ENCODE measurements at regions of chr3 and their contacts with region 1.

Region 1: DNA sequence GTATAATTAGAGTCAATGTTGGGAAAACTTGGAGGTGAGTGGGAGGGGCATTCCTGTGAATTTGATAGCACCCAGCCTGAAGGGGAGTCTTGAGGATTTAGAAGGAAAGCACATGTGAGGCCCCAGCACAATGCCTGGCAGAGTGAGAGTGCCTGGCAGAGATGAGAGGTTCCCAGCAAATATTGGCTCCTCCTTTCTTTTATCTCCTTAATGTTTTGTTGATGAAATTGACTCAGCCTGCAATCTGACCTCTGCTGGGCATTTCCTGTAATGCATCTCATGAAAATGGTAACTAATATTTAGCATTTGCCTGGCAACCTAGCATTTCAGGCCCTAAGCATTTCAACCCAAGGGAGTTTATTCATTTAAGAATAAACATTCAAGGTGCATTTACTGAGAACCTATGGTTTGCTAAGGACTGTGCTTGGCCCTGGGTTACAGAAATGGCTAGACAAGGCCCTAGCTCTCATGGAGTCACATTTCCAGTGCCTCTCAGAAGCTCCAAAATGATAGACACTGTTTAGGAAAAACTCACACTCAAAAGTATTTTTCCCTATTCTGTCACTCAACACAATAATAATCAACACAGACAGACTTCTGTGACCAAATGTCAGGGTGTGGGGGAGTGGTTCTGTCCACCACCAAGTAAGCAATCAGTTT is 19.0 kb downstream of the PDHB start:
- DNase-seq: peak; percentile 46 to 65 (median 53)
- H3K4me3 ChIP-seq: no peak overlapping the region
- H3K4me3 Mint-ChIP-seq: no peak overlapping the region
- H3K27ac ChIP-seq: no peak overlapping the region
- H3K27ac Mint-ChIP-seq: peak overlapping the region in 1 of 7 donors; percentile 47
- H3K4me1 ChIP-seq: no peaks in the 10 kb centered on the region
- H3K4me1 Mint-ChIP-seq: peaks cover 0 to 6% (median 4%) of the 10 kb centered on the region in 4 donors
- H3K27me3 ChIP-seq: no peaks in the 10 kb centered on the region
- H3K27me3 Mint-ChIP-seq: no peaks in the 10 kb centered on the region

Region 2: GRCh38 chr3:58188173-58188564 is 226.5 kb before region 1 on chr3:
- CTCF ChIA-PET with region 1: interaction called, 5 read pairs
- POLR2A ChIA-PET with region 1: no interaction called
- intact Hi-C with region 1: loop called (anchors 1 kb)
- DNase-seq: no peak
- H3K4me3 ChIP-seq: no peak overlapping the region
- H3K4me3 Mint-ChIP-seq: no peak overlapping the region
- H3K27ac ChIP-seq: no peak overlapping the region
- H3K27ac Mint-ChIP-seq: no peak overlapping the region
- H3K4me1 ChIP-seq: no peaks in the 10 kb centered on the region
- H3K4me1 Mint-ChIP-seq: peaks cover 0 to 4% (median 3%) of the 10 kb centered on the region in 4 donors
- H3K27me3 ChIP-seq: no peaks in the 10 kb centered on the region
- H3K27me3 Mint-ChIP-seq: no peaks in the 10 kb centered on the region

Region 3: GRCh38 chr3:58237238-58237940 is 177.3 kb before region 1 on chr3 and contains the start of gene ABHD6:
- CTCF ChIA-PET with region 1: interaction called, 3 read pairs
- POLR2A ChIA-PET with region 1: interaction called, 3 read pairs
- intact Hi-C with region 1: loop called (anchors 1 kb)
- DNase-seq: peak; percentile 72 to 93 (median 88)
- H3K4me3 ChIP-seq: peak within 1 kb of the TSS; percentile 58
- H3K4me3 Mint-ChIP-seq: peak within 1 kb of the TSS; percentile 88 to 96 (median 92)
- H3K27ac ChIP-seq: peak within 1 kb of the TSS; percentile 62
- H3K27ac Mint-ChIP-seq: peak within 1 kb of the TSS; percentile 85 to 92 (median 91)
- H3K4me1 ChIP-seq: peaks cover 12% of the 10 kb centered on the region
- H3K4me1 Mint-ChIP-seq: peaks cover 7 to 21% (median 12%) of the 10 kb centered on the region in 4 donors
- H3K27me3 ChIP-seq: no peaks in the 10 kb centered on the region
- H3K27me3 Mint-ChIP-seq: peaks cover 3 to 4% of the 10 kb centered on the region in 2 donors
- total RNA-seq, gene ABHD6: 5.1 to 7.2 TPM

Region 4: DNA sequence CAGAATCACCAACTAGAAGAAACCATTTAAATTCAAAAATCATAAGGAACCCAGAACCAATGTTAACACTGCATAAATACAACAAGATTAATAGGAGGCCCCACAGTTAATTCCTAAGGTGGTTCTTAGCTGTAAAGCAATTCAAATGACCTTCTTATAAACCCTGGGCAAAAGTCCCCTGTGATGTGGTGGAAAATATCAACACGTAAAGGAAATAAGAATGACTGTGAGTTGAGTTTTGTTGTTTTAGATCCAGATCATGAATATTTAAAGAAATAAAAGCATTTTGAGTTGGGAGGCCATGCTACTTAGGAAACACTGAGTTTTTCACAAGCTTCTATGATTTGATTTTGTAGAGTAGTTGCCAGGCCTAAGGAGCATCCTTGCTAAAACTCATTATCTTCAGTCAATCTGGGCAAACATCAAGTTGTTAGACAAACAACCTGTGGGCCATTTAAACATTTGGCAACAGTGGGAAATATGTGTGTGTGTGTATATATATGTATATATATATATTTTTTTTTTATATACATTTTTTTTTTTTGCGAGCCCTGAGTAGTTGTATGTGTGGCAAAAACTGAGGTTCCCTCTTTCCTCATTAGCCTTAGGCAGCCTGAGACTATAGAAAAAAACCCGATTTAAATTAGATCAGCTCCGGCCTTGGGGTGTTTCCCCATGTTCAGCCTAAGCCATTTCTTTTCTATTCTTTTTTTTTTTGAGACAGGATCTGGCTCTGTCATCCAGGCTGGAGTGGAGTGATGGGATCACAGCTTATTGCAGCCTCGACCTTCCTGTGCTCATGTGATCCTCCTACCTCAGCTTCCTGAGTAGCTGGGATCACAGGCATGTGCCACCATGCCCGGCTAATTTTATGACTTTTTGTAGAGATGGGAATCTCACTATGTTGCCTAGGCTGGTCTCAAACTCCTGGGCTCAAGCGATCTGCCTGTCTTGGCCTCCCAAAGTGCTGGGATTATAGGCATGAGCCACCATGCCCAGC is 90.0 kb before region 1 on chr3:
- CTCF ChIA-PET with region 1: interaction called, 50 read pairs
- POLR2A ChIA-PET with region 1: no interaction called
- intact Hi-C with region 1: loop called (anchors 1 kb)
- DNase-seq: peak; percentile 15 to 51 (median 39)
- H3K4me3 ChIP-seq: no peak overlapping the region
- H3K4me3 Mint-ChIP-seq: peak overlapping the region in 1 of 8 donors; percentile 7
- H3K27ac ChIP-seq: no peak overlapping the region
- H3K27ac Mint-ChIP-seq: peak overlapping the region; percentile 76 to 87 (median 79)
- H3K4me1 ChIP-seq: peaks cover 18% of the 10 kb centered on the region
- H3K4me1 Mint-ChIP-seq: peaks cover 7 to 25% (median 17%) of the 10 kb centered on the region in 4 donors
- H3K27me3 ChIP-seq: no peaks in the 10 kb centered on the region
- H3K27me3 Mint-ChIP-seq: no peaks in the 10 kb centered on the region

Region 5: GRCh38 chr3:58332575-58333188 is 82.0 kb before region 1 on chr3 and contains the start of gene PXK:
- CTCF ChIA-PET with region 1: interaction called, 5 read pairs
- POLR2A ChIA-PET with region 1: no interaction called
- intact Hi-C with region 1: loop called (anchors 1 kb)
- DNase-seq: peak; percentile 75 to 84 (median 81)
- H3K4me3 ChIP-seq: peak within 1 kb of the TSS; percentile 46 to 57
- H3K4me3 Mint-ChIP-seq: peak within 1 kb of the TSS; percentile 96 to 100 (median 100)
- H3K27ac ChIP-seq: peak within 1 kb of the TSS; percentile 56
- H3K27ac Mint-ChIP-seq: peak within 1 kb of the TSS; percentile 85 to 98 (median 95)
- H3K4me1 ChIP-seq: peaks cover 30% of the 10 kb centered on the region
- H3K4me1 Mint-ChIP-seq: peaks cover 23 to 48% (median 33%) of the 10 kb centered on the region in 4 donors
- H3K27me3 ChIP-seq: no peaks in the 10 kb centered on the region
- H3K27me3 Mint-ChIP-seq: no peaks in the 10 kb centered on the region
- total RNA-seq, gene PXK: 20.0 to 20.2 TPM

Region 6: DNA sequence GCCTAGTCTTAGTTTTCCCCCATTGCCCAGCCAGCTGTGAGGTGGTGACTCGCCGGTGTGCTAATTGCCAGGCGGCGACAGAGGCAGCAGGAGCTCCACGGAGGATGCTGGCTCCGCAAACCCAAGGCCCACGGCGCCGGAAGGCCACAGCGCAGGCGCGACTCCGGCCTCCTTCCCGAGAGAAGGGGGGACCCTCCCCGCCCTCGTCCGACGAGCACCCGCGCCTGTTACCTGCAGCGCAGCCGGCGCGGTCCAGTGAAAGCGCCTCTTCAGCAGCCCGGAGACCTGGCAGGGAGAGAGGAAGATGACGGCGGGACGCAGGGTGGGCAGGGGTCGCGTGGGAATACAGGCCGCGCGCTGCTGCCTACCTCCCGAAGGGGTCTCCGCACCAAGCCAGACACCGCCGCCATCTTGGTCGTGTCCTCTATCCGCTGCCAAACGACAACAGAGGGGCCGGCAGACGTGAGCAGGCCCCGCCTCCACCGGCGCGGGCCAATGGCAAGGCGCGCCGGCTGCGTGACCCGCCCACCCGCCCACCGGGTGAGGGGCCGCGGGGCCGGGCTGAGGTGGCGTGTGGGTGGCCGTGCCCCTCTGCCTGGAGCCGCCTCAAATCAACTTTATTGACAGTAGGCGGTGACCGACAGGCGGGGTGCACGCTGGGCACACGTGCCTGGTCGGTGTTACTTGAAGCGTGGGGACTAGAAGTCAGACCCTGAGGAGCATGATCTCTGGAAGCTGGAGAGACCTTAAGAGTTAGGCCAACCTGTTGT is 18.9 kb after region 1 on chr3 and contains the start of gene PDHB:
- CTCF ChIA-PET with region 1: interaction called, 17 read pairs
- POLR2A ChIA-PET with region 1: interaction called, 8 read pairs
- intact Hi-C with region 1: no loop called
- DNase-seq: peak; percentile 86 to 91 (median 89)
- H3K4me3 ChIP-seq: peak within 1 kb of the TSS; percentile 69 to 82
- H3K4me3 Mint-ChIP-seq: peak within 1 kb of the TSS; percentile 91 to 94 (median 92)
- H3K27ac ChIP-seq: peak within 1 kb of the TSS; percentile 77
- H3K27ac Mint-ChIP-seq: peak within 1 kb of the TSS; percentile 88 to 98 (median 91)
- H3K4me1 ChIP-seq: peaks cover 25% of the 10 kb centered on the region
- H3K4me1 Mint-ChIP-seq: peaks cover 16 to 36% (median 25%) of the 10 kb centered on the region in 4 donors
- H3K27me3 ChIP-seq: no peaks in the 10 kb centered on the region
- H3K27me3 Mint-ChIP-seq: no peaks in the 10 kb centered on the region
- total RNA-seq, gene PDHB: 55.0 to 58.6 TPM

Region 7: DNA sequence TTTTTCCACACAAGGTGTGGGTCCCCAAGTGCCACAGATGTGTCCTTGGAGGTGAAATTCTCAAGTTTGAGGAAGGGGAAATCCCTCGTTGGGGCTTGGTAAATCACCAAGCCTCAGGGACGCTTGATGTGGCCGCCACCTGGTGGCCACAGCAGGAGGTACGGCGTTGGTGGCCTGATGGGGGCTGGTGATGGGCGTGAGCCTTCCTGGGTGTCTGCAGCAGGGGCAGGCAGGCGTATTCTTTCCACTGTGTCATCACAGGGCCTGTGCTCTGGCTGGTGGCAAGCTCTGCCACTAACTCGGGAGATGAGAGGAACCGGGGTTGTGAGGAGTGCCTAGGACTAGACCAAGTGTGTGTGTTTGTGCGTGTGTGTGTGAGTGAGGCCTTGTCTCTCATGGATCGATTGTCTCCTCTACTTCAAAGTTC is 118.1 kb after region 1 on chr3:
- CTCF ChIA-PET with region 1: interaction called, 4 read pairs
- POLR2A ChIA-PET with region 1: no interaction called
- intact Hi-C with region 1: loop called (anchors 1 kb)
- DNase-seq: peak; percentile 71 to 79 (median 75)
- H3K4me3 ChIP-seq: no peak overlapping the region
- H3K4me3 Mint-ChIP-seq: no peak overlapping the region
- H3K27ac ChIP-seq: no peak overlapping the region
- H3K27ac Mint-ChIP-seq: peak overlapping the region in 6 of 7 donors; percentile 16 to 87 (median 69)
- H3K4me1 ChIP-seq: peaks cover 9% of the 10 kb centered on the region
- H3K4me1 Mint-ChIP-seq: peaks cover 4 to 8% (median 7%) of the 10 kb centered on the region in 4 donors
- H3K27me3 ChIP-seq: no peaks in the 10 kb centered on the region
- H3K27me3 Mint-ChIP-seq: no peaks in the 10 kb centered on the region

Measured in CD4-positive, alpha-beta memory T cell (primary cell).